ENCODE measurements at regions of chr17 and their contacts with region 1.

Region 1: GRCh38 chr17:6069539-6070429 is at the start of gene WSCD1:
- DNase-seq: peak in 9 of 10 donors; percentile 32 to 92 (median 56)

Region 2: DNA sequence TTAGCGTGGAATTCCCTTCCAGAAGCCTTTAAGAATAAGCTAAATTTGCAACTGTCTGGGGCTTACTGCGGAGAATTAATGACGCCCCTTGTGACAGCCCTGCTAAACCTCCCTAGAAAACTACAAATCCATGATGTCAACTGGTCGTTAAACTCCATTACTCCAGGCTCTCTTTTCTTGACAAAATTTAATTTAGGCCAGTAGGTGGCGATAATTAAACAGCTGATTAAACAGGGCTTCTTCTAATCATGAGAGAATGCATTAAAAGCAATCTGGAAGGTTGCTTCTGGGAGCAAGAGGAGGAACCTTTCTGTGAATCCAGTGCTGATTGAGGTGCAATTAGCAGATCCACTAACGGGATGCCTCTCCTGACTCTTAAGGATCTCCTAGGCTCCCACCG is 477.4 kb before region 1 on chr17:
- intact Hi-C with region 1: loop called (anchors 10 kb)
- DNase-seq: no peak

Region 3: GRCh38 chr17:5832886-5833285 is 236.9 kb before region 1 on chr17:
- intact Hi-C with region 1: loop called (anchors 10 kb)
- DNase-seq: no peak

Region 4: DNA sequence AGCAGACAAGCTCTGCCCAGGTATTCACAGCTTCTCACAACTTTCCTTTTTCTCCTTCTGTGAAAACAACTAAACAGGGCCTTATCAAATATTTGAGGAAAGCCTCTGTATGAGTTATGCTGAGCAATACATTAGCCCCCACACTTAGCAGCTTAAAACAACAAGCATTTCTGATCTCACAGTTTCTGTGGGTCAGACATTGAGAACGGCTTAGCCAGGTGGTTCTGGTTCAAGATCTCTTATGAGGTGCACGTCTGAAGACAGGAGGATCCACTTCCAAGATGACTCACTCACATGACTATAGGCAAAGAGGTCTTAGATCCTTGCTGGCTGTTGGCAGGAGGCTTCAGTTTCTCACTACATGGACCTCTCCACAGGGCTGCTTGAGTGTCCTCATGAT is 181.0 kb before region 1 on chr17:
- intact Hi-C with region 1: loop called (anchors 10 kb)
- DNase-seq: no peak

Region 5: DNA sequence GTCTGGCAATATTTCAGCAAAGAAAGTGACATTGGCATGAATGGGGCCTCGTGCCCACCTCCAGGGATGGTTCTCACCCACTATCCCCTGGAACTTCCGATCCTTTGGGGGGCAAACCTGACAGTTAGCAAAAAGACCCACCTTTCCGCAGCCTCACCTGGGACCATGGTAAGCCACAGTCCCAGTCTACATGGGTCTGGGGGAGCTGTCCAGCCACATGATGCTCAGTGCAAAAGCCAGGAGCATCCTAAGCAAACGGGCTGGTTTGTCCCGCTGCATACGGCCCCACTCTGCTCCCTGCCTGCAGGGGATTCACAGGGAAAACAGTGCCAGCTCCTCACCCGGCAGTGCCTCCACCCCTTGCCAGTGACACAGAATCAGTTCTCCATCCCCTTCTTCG is 345.8 kb after region 1 on chr17:
- intact Hi-C with region 1: loop called (anchors 5 kb)
- DNase-seq: no peak